CD8-positive, alpha-beta T cell (primary cell): ENCODE measurements at regions of chr17 and their contacts with region 1.

Region 1: GRCh38 chr17:74961657-74962490 is 10.7 kb downstream of the HID1 start:
- DNase-seq: peak; percentile 62 to 93 (median 85)
- ATAC-seq: peak; percentile 75
- H3K4me3 ChIP-seq: no peak overlapping the region
- H3K4me3 Mint-ChIP-seq: no peak overlapping the region
- H3K27ac ChIP-seq: no peak overlapping the region
- H3K27ac Mint-ChIP-seq: no peak overlapping the region
- H3K4me1 ChIP-seq: no peaks in the 10 kb centered on the region
- H3K4me1 Mint-ChIP-seq: peaks cover 9% of the 10 kb centered on the region
- H3K27me3 ChIP-seq: no peaks in the 10 kb centered on the region
- H3K27me3 Mint-ChIP-seq: no peaks in the 10 kb centered on the region
- CTCF ChIP-seq: peak; percentile 86

Region 2: GRCh38 chr17:74790161-74791054 is 171.5 kb before region 1 on chr17:
- CTCF ChIA-PET with region 1: interaction called, 36 read pairs
- POLR2A ChIA-PET with region 1: no interaction called
- intact Hi-C with region 1: loop called (anchors 1 kb)
- DNase-seq: peak in 1 of 9 experiments; percentile 27
- ATAC-seq: no peak
- H3K4me3 ChIP-seq: peak overlapping the region in 1 of 2 experiments; percentile 5
- H3K4me3 Mint-ChIP-seq: peak overlapping the region; percentile 57
- H3K27ac ChIP-seq: no peak overlapping the region
- H3K27ac Mint-ChIP-seq: peak overlapping the region; percentile 71
- H3K4me1 ChIP-seq: peaks cover 33% of the 10 kb centered on the region
- H3K4me1 Mint-ChIP-seq: peaks cover 40% of the 10 kb centered on the region
- H3K27me3 ChIP-seq: no peaks in the 10 kb centered on the region
- H3K27me3 Mint-ChIP-seq: no peaks in the 10 kb centered on the region
- CTCF ChIP-seq: no peak

Region 3: GRCh38 chr17:74892974-74893911 is 68.6 kb before region 1 on chr17 and contains the start of gene FADS6:
- CTCF ChIA-PET with region 1: no interaction called
- POLR2A ChIA-PET with region 1: no interaction called
- intact Hi-C with region 1: no loop called
- DNase-seq: no peak
- ATAC-seq: peak; percentile 51
- H3K4me3 ChIP-seq: peak within 1 kb of the TSS in 1 of 2 experiments; percentile 35
- H3K4me3 Mint-ChIP-seq: peak within 1 kb of the TSS; percentile 80
- H3K27ac ChIP-seq: no peak within 1 kb of the TSS
- H3K27ac Mint-ChIP-seq: no peak within 1 kb of the TSS
- H3K4me1 ChIP-seq: peaks cover 13% of the 10 kb centered on the region
- H3K4me1 Mint-ChIP-seq: peaks cover 8% of the 10 kb centered on the region
- H3K27me3 ChIP-seq: peaks cover 12 to 17% of the 10 kb centered on the region in 2 experiments
- H3K27me3 Mint-ChIP-seq: peaks cover 37% of the 10 kb centered on the region
- CTCF ChIP-seq: no peak
- total RNA-seq, gene FADS6: not detected

Region 4: DNA sequence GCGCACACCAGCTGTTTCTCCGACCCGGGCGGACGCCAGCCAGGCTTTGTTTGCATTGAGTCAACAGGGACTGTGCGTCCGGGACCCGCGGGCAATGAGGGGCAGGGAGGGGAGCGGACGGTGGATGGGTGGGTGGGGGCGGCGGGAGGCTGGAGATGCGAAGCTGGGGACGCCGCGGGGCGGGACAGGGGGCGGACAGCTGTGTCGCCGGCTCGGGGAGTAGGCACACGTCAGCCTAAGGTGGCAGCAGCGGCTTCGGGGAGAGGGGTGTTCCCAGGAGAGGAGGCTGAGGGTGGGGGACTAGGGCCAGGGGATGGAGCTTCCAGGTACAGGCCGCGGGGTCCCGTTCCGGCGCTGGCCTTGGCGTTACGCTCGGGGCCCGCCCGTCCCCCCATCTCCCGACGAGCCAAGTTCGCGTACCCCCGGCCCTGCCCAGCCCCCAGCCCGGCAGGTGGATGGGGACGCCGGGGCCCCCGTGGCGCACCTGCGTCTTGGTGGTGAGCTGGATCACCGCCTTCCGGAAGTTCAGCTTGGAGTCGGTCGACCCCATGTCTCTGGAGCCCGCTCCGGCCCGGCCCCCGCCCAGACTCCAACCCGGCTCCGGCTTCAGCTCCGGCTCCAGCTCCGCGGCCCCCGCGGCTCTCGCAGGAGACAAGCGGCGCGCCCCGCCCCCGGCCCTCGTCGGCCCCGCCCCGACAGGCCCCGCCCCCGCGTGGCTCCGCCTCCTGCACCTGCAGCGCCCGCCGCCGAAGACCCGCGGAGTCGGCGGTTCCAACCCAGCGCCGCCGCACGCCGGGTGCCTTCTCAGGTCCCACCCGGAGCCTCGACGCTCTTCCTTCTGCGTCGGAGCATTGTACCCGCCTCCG is 10.5 kb after region 1 on chr17 and contains the start of gene HID1:
- CTCF ChIA-PET with region 1: interaction called, 56 read pairs
- POLR2A ChIA-PET with region 1: interaction called, 9 read pairs
- intact Hi-C with region 1: no loop called
- DNase-seq: peak; percentile 64 to 90 (median 80)
- ATAC-seq: peak; percentile 93
- H3K4me3 ChIP-seq: peak within 1 kb of the TSS; percentile 53 to 69
- H3K4me3 Mint-ChIP-seq: peak within 1 kb of the TSS; percentile 85
- H3K27ac ChIP-seq: peak within 1 kb of the TSS in 1 of 2 experiments; percentile 23
- H3K27ac Mint-ChIP-seq: peak within 1 kb of the TSS; percentile 52
- H3K4me1 ChIP-seq: peaks cover 10% of the 10 kb centered on the region
- H3K4me1 Mint-ChIP-seq: peaks cover 4% of the 10 kb centered on the region
- H3K27me3 ChIP-seq: peaks cover 3 to 9% of the 10 kb centered on the region in 2 experiments
- H3K27me3 Mint-ChIP-seq: peaks cover 11% of the 10 kb centered on the region
- CTCF ChIP-seq: no peak
- total RNA-seq, gene HID1: 25.9 to 26.4 TPM

Region 5: DNA sequence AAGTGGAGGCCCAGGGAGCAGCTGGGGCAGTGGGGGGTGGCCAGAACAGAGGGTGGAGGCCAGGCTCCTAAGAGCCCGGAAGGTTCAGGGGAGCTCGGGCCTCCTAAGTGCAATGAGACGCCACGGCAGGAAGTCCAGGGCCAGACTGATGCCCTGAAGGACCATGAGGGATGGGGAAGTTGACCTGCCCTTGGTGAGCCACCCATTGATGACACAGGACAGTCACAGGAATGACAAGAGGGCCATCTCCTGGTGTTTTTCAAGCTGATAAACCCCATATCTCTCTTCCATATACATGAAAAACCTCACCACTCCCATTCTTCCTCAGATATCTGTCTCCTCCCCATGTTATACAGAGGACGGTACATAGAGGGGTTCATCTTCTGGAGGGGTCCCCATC is 44.8 kb after region 1 on chr17:
- CTCF ChIA-PET with region 1: interaction called, 58 read pairs
- POLR2A ChIA-PET with region 1: interaction called, 18 read pairs
- intact Hi-C with region 1: loop called in 1 of 2 experiments (anchors 1 kb)
- DNase-seq: peak in 1 of 9 experiments; percentile 42
- ATAC-seq: no peak
- H3K4me3 ChIP-seq: no peak overlapping the region
- H3K4me3 Mint-ChIP-seq: no peak overlapping the region
- H3K27ac ChIP-seq: no peak overlapping the region
- H3K27ac Mint-ChIP-seq: no peak overlapping the region
- H3K4me1 ChIP-seq: no peaks in the 10 kb centered on the region
- H3K4me1 Mint-ChIP-seq: peaks cover 2% of the 10 kb centered on the region
- H3K27me3 ChIP-seq: no peaks in the 10 kb centered on the region
- H3K27me3 Mint-ChIP-seq: no peaks in the 10 kb centered on the region
- CTCF ChIP-seq: no peak

Region 6: DNA sequence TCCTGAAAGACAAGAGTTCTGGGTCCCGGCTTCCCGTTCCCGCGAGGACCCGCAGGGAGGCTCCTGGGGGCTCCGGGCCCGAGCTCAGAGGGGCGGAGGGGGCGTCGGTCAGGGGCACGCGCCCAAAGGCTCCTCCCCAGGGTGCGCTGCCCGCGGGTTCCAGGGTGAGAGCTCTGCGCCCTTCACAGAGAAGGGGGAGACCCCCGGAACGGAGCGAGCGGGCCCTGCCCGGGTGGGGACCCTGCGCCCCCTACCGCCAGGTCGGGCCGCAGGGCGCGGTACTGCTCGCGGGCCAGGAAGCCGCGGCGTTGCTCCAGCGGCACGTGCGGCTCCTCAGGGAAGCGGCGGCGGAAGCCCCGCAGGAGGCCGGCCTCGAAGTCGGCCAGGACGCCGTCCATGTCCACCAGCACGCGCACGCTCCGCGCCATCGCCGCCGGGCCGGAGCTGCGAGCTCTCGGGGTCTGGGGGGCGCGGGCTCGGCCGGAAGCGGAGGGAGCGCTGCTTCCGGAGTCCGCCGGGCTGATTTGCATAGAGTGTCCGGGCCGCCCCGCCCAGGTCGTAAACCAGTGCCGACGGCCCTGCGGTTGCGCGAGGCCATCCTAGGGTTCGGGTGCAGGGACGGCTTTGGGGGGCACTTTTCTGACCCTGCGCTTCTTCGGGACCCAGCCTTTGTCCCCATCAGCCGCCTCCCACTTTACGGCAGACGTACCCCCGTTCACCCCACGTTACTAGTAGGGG is 169.6 kb after region 1 on chr17 and contains the start of gene NT5C:
- CTCF ChIA-PET with region 1: interaction called, 7 read pairs
- POLR2A ChIA-PET with region 1: no interaction called
- intact Hi-C with region 1: loop called in 1 of 2 experiments (anchors 5 kb)
- DNase-seq: peak in 8 of 9 experiments; percentile 43 to 82 (median 66)
- ATAC-seq: peak; percentile 79
- H3K4me3 ChIP-seq: peak within 1 kb of the TSS; percentile 80 to 84
- H3K4me3 Mint-ChIP-seq: peak within 1 kb of the TSS; percentile 86
- H3K27ac ChIP-seq: peak within 1 kb of the TSS; percentile 64 to 83
- H3K27ac Mint-ChIP-seq: peak within 1 kb of the TSS; percentile 77
- H3K4me1 ChIP-seq: peaks cover 8% of the 10 kb centered on the region
- H3K4me1 Mint-ChIP-seq: peaks cover 15% of the 10 kb centered on the region
- H3K27me3 ChIP-seq: no peaks in the 10 kb centered on the region
- H3K27me3 Mint-ChIP-seq: no peaks in the 10 kb centered on the region
- CTCF ChIP-seq: peak; percentile 19
- total RNA-seq, gene NT5C: 19.3 to 20.4 TPM

Region 7: GRCh38 chr17:75152922-75153779 is 191.3 kb after region 1 on chr17:
- CTCF ChIA-PET with region 1: no interaction called
- POLR2A ChIA-PET with region 1: no interaction called
- intact Hi-C with region 1: no loop called
- DNase-seq: peak in 3 of 9 experiments; percentile 19 to 35 (median 21)
- ATAC-seq: no peak
- H3K4me3 ChIP-seq: peak overlapping the region; percentile 88 to 94
- H3K4me3 Mint-ChIP-seq: peak overlapping the region; percentile 91
- H3K27ac ChIP-seq: no peak overlapping the region
- H3K27ac Mint-ChIP-seq: peak overlapping the region; percentile 69
- H3K4me1 ChIP-seq: peaks cover 23% of the 10 kb centered on the region
- H3K4me1 Mint-ChIP-seq: peaks cover 31% of the 10 kb centered on the region
- H3K27me3 ChIP-seq: no peaks in the 10 kb centered on the region
- H3K27me3 Mint-ChIP-seq: no peaks in the 10 kb centered on the region
- CTCF ChIP-seq: no peak

Region 8: GRCh38 chr17:75205037-75205792 is 243.3 kb after region 1 on chr17 and contains the start of gene NUP85:
- CTCF ChIA-PET with region 1: interaction called, 45 read pairs
- POLR2A ChIA-PET with region 1: interaction called, 3 read pairs
- intact Hi-C with region 1: loop called (anchors 1 kb)
- DNase-seq: peak; percentile 84 to 96 (median 92)
- ATAC-seq: peak; percentile 93
- H3K4me3 ChIP-seq: peak within 1 kb of the TSS; percentile 85 to 93
- H3K4me3 Mint-ChIP-seq: peak within 1 kb of the TSS; percentile 94
- H3K27ac ChIP-seq: peak within 1 kb of the TSS; percentile 70 to 89
- H3K27ac Mint-ChIP-seq: peak within 1 kb of the TSS; percentile 99
- H3K4me1 ChIP-seq: peaks cover 19% of the 10 kb centered on the region
- H3K4me1 Mint-ChIP-seq: peaks cover 23% of the 10 kb centered on the region
- H3K27me3 ChIP-seq: no peaks in the 10 kb centered on the region
- H3K27me3 Mint-ChIP-seq: no peaks in the 10 kb centered on the region
- CTCF ChIP-seq: no peak
- total RNA-seq, gene NUP85: 57.4 to 65.3 TPM